Tibial artery (tissue), 4 donors: ENCODE measurements at regions of chr16 and their contacts with region 1.

Region 1: DNA sequence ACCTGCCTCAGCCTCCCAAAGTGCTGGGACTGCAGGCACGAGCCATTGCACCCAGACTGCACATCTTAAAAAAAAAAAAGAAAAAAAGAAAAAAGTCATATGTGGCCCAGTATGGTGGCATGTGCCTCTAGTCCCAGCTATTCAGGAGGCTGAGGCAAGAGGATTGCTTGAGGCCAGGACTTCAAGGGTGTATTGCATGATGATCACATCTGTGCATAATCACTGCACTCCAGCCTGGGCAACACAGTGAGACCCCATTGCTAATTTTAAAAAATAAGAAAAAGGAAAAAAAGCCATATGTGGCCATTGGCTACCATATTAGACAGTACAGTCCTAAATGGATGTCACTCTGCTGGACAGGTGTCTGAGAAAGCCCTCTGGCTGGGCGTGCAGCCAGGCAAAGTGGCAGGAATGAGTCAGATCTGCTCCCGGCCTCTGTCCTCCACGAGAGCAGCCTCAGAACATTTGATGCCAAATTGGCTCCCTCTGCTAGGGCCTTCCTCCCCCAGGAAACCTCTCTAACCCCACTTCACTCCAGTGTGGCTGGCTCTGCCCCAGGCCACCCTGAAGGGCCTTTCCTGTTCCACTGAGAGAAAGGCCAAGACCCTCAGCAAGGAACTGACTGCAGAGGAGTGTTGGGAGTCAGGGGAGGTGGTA is 14.7 kb downstream of the CA7 start:
- DNase-seq: no peak
- H3K4me3 ChIP-seq: no peak overlapping the region
- H3K27ac ChIP-seq: no peak overlapping the region
- H3K4me1 ChIP-seq: no peaks in the 10 kb centered on the region
- H3K27me3 ChIP-seq: no peaks in the 10 kb centered on the region
- CTCF ChIP-seq: no peak

Region 2: DNA sequence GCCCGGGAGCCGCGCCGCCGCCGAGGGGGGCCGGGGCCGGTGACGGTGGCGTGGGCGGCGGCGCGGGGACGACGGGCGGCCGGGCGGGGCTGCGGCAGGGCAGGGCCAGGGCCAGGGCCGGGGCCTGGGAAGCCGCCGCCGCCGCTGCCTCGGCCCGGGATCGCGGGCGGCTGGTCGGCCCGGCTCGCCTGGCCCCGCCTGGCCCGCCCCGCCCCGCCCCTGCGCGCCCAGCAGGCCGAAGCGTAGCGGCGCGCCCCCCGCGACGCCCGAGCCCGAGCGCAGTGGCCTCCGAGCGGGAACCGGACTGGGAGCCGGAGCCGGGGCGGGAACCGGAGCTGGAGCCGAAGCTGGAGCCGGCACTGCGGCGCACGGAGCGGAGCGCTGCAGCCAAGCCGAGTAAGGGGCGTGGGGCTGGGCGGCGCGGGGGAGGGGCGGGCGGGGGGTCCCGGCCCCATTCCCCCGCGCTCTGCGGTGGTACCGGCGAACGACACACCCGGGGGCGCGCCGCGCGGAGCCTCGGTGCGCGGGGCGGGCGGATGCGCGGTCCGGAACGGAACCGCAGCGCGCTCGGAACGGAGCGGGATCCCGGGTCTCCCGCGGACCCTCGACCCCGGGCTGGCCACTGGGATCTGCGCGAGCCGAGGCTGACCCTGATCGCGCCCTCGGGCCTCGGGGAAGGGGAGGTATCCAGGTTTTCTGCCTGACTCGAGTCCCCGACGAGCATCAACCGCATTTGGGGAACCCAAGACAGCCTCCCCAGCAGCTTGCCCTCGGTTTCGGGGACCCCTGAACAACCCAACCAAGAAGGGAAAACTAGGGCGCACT is 431.6 kb before region 1 on chr16 and contains the start of gene BEAN1:
- intact Hi-C with region 1: loop called (anchors 10 kb)
- DNase-seq: no peak
- H3K4me3 ChIP-seq: peak within 1 kb of the TSS; percentile 49 to 62
- H3K27ac ChIP-seq: no peak within 1 kb of the TSS
- H3K4me1 ChIP-seq: peaks cover 0 to 27% (median 20%) of the 10 kb centered on the region in 4 donors
- H3K27me3 ChIP-seq: peaks cover 0 to 35% of the 10 kb centered on the region in 2 donors
- CTCF ChIP-seq: no peak

Region 3: DNA sequence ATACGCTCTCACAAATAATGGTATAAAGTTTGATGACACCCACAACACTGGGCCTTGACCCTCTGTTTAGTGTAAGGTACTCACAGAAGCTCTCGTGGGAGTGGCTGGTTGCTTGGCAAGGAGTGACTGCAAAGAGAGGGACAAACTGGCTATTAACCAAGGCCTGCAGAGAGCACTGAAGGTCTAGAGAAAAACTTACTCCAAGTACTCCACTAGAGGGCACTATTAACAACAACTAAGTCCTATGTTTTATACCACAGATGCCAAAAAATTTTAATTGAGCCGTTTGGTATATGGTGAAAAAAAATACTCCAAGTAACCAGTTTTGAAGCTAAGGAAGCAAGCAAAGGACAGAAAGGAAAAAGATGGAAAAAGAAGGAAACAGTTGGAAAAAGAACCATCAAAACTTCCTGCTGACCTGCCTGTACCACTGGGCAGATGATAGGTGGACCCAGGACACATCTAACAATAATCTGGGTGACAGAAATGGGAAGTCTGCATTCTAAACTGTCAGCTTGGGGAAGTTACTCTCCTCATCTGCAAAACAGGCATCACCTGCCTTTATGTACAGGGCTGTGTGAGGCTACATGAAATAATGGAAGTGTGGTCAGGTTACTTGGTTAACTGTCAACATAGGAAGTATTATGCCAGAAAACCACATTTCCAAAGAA is 130.6 kb before region 1 on chr16:
- intact Hi-C with region 1: loop called (anchors 10 kb)
- DNase-seq: no peak
- H3K4me3 ChIP-seq: no peak overlapping the region
- H3K27ac ChIP-seq: no peak overlapping the region
- H3K4me1 ChIP-seq: peaks cover 0 to 9% (median 2%) of the 10 kb centered on the region in 4 donors
- H3K27me3 ChIP-seq: no peaks in the 10 kb centered on the region
- CTCF ChIP-seq: peak; percentile 58 to 71

Region 4: DNA sequence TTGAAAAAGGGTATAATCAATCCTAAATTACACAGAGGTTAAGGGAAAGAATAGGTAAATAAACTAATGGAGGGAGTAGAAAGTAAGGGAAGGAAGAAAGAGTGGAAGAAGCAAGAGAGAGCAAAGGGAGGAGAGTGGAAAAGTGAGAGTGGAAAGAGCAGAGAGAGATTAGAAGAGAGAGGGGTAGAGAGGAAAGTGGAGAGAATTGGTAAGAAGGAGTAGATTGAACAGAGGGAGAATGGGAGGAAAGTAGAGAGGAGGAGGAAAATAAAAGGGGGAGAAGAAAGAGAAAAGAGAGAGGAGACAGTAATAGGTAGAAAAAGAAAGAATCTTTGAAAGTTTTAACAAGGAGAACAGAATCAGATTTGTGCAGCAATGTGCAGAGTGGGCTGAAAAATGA is 82.4 kb before region 1 on chr16:
- intact Hi-C with region 1: no loop called
- DNase-seq: no peak
- H3K4me3 ChIP-seq: no peak overlapping the region
- H3K27ac ChIP-seq: no peak overlapping the region
- H3K4me1 ChIP-seq: no peaks in the 10 kb centered on the region
- H3K27me3 ChIP-seq: no peaks in the 10 kb centered on the region
- CTCF ChIP-seq: no peak

Region 5: DNA sequence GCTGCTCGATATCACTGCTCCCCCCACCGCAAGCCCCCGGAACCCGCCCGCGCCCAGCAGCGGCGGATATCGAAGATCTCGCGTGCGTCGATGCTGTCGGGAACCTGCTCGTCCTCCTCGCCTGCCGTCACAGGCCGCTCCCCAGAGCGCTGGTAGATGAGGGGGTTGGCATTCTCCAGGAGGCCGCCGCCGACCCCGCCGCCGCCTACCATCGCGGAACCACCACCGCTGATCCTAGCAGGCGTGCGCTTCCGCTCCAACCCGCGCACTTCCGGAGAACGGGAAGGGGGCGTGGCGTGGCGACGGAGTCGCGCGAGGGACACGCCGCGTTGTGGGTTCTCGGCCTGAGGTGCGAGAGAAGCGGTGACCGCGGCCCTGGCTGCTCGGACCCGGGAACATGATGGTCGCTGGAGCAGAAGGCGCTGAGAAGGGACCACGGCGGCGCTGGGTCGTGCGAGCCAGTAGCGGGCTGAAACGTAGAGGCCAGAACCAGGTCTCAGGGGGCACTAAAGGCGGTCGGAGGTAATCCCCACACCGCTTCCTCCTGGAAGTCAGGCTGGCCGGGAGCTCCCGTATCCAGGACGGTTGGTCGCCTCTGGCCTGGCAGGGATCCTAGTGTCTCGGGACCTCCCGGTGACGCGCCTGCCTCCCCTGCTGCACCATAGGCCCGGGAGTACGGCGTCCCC is 75.4 kb after region 1 on chr16 and contains the start of gene CIAO2B:
- intact Hi-C with region 1: no loop called
- DNase-seq: peak; percentile 86 to 94
- H3K4me3 ChIP-seq: peak within 1 kb of the TSS; percentile 95 to 97
- H3K27ac ChIP-seq: peak within 1 kb of the TSS; percentile 95 to 97
- H3K4me1 ChIP-seq: peaks cover 4 to 45% (median 35%) of the 10 kb centered on the region in 4 donors
- H3K27me3 ChIP-seq: no peaks in the 10 kb centered on the region
- CTCF ChIP-seq: no peak

Region 6: GRCh38 chr16:67173808-67174705 is 315.2 kb after region 1 on chr16:
- intact Hi-C with region 1: no loop called
- DNase-seq: peak; percentile 91 to 97
- H3K4me3 ChIP-seq: peak overlapping the region; percentile 54 to 65
- H3K27ac ChIP-seq: peak overlapping the region; percentile 92 to 96
- H3K4me1 ChIP-seq: peaks cover 7 to 68% (median 62%) of the 10 kb centered on the region in 4 donors
- H3K27me3 ChIP-seq: no peaks in the 10 kb centered on the region
- CTCF ChIP-seq: peak; percentile 23 to 32